ENCODE measurements at regions of chr10 and their contacts with region 1.

Region 1: DNA sequence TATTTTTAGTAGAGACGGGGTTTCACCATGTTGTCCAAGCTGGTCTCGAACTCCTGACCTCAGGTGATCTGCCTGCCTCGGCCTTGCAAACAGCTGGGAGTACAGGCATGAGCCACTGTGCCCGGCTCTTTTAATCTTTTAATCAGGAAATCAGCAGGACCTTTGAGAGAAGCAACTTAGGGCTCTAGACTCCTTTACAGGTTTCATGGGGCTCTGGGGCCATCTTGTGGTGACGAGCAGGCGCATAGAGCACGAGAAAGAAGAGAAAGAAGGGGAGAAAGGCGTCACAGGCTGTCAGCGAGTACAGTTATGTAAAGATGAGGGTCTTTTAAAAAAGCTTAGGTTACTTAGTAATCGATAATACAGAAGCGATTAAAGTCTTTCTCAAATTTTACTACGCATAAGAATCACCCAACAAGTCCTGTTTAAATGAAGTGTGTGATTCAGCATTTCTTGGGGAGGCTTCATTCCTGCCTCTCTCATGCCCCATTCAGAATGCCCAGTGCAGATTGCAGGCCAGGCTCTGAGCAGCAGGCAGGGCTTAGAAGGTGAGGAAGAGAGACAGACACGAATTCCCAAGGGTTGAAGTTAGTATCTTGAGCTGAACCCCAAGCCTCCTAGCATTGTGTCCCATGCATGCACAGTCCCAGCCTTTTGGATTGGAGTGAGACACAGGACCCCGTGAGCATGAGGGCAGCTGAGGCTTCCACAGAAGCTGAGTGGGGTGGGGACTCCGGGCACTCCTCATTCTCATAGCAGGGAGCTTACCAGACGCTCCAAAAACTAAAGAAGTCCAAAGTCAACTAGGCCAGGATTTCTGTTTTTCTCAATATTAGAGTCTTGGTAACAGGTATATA is 23.6 kb upstream of the PFKP start:
- DNase-seq: no peak
- H3K4me3 ChIP-seq: no peak overlapping the region
- H3K27ac ChIP-seq: peak overlapping the region; percentile 40
- H3K27me3 ChIP-seq: no peaks in the 10 kb centered on the region
- CTCF ChIP-seq: peak; percentile 86

Region 2: DNA sequence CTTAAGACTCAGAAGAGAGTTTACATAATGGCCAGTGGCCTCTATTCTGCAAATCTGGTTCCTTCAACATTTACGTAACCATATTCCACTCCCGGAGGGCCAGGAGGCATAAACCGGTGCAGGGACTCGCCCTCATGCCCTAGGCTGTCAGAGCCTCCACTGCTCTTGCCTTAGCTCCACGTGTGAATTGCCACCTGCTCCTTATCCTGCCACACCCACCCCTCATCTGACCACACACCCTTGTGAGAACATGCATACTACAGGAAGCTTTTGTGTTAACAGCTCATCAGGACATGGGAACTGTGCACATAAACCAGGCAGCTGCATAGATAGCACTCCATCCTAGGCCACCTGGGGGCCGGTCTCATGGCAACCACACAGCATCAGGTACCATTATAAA is 123.1 kb before region 1 on chr10:
- CTCF ChIA-PET with region 1: interaction called, 247 read pairs
- POLR2A ChIA-PET with region 1: no interaction called
- DNase-seq: no peak
- H3K4me3 ChIP-seq: no peak overlapping the region
- H3K27ac ChIP-seq: no peak overlapping the region
- H3K27me3 ChIP-seq: peaks cover 5% of the 10 kb centered on the region
- CTCF ChIP-seq: no peak

Region 3: DNA sequence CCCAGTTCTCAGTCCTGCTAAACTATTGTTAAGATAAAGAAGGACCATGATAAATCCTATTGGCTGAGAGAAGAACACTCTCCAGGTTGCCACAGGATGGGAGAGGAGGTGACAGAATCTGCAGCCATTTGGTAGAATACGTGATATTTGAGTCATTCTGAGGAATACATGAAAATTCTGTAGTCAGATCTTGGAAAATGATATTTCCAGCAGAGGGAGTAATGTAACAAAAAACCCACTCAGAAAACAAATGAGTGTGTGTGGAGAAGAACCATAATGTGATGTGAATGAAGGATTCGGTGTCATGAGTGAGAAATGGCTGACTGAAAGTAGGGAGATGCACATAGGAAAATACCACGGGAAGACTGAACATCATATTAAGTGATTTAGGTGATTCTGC is 104.9 kb before region 1 on chr10:
- CTCF ChIA-PET with region 1: interaction called, 247 read pairs
- POLR2A ChIA-PET with region 1: no interaction called
- DNase-seq: no peak
- H3K4me3 ChIP-seq: no peak overlapping the region
- H3K27ac ChIP-seq: no peak overlapping the region
- H3K27me3 ChIP-seq: peaks cover 14% of the 10 kb centered on the region
- CTCF ChIP-seq: peak; percentile 37

Region 4: DNA sequence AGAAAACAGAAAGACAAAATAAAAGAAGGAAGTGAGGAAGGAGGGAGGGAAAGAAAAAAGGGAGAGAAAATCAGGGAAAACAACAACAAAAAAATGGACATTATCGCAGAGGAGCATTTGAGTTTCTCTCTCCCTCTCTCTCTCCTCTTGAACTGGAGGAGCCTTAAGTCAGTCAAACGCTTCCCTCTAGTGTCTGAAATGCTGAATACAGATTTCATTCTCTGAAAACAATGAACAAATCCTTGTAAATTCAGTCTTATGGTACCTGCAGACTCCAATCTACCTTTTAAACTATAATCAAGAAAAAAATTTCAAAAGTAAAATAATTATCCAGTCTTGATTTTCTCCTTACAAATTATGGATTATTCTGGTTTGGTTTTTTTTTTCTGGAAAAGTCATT is 65.6 kb before region 1 on chr10:
- CTCF ChIA-PET with region 1: interaction called, 15 read pairs
- POLR2A ChIA-PET with region 1: no interaction called
- DNase-seq: no peak
- H3K4me3 ChIP-seq: no peak overlapping the region
- H3K27ac ChIP-seq: no peak overlapping the region
- H3K27me3 ChIP-seq: no peaks in the 10 kb centered on the region
- CTCF ChIP-seq: peak; percentile 76

Region 5: DNA sequence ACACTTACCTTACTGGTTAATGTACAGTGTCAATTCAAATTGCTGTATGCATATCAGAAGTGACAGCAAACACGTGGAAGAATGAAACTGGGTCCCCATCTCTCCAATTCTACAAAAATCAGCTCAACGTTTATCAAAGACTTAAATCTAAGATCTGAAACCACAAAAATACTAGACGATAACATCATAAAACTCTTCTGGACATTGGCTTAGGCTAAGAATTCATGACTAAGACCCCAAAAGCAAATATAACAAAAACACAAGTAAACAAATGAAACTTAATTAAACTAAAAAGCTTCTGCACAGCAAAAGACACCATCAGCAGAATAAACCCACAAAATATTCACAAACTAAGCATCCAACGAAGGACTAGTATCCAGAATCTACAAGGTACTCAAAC is 12.2 kb before region 1 on chr10:
- CTCF ChIA-PET with region 1: interaction called, 35 read pairs
- POLR2A ChIA-PET with region 1: interaction called, 4 read pairs
- DNase-seq: no peak
- H3K4me3 ChIP-seq: no peak overlapping the region
- H3K27ac ChIP-seq: no peak overlapping the region
- H3K27me3 ChIP-seq: no peaks in the 10 kb centered on the region
- CTCF ChIP-seq: no peak

Region 6: GRCh38 chr10:3095373-3096139 is 51.8 kb after region 1 on chr10:
- CTCF ChIA-PET with region 1: interaction called, 20 read pairs
- POLR2A ChIA-PET with region 1: interaction called, 17 read pairs
- DNase-seq: peak; percentile 96
- H3K4me3 ChIP-seq: peak overlapping the region; percentile 41
- H3K27ac ChIP-seq: peak overlapping the region; percentile 96
- H3K27me3 ChIP-seq: no peaks in the 10 kb centered on the region
- CTCF ChIP-seq: no peak

Measured in AG04450 (cell line).